ENCODE measurements at regions of chr3 and their contacts with region 1.

Region 1: DNA sequence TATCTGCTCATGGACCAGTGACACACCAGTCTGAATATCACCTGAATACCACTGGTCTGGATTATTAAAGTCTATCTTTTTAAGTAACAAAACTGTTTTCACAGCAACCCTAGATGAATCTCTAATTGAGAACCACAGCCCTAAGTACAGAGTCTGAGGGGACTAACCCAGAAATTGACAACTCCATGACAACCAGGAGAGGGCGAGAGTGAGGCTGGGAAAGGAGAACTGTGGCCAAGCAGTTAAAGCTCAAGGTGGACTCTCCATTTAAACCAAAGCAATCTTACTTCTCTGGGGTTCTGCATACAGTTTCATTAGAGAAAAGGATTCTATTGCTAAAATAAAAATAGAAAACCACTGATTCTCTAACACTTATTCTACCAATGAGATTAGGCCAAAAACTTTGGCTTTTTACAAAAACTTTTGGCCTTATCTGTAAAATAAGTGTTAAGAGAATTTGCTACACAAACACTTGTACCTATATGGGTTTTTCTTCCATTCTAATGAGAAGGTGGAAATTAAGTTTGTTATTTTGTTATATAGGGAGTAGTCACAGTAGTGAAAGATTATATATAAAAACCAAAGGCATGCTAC is 11.4 kb downstream of the NEK10 start:
- DNase-seq: peak; percentile 80
- H3K4me3 ChIP-seq: no peak overlapping the region
- H3K27ac ChIP-seq: no peak overlapping the region
- H3K4me1 ChIP-seq: peaks cover 45% of the 10 kb centered on the region
- H3K27me3 ChIP-seq: no peaks in the 10 kb centered on the region
- CTCF ChIP-seq: peak; percentile 73 to 79
- POLR2A ChIP-seq: no peak

Region 2: DNA sequence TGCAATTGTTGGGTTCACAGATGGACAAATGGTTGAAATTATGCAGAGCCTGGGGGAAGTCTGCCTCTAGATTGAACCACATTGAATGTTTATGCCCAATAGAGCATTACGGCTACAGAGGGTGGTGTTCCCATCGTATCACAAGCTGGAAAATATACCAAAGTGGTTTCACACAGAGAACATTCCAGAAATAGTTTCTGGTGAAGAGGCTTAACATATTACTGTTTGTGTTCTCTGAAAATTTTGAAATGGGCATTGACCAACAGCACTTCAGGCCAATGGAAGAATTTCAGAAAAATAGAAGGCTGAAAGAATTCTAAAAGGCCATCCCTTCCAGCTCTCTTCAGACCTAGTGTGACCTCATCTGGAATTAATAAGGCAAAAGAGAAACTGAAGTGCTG is 192.4 kb before region 1 on chr3:
- CTCF ChIA-PET with region 1: no interaction called
- POLR2A ChIA-PET with region 1: no interaction called
- dilution Hi-C with region 1: no loop called
- intact Hi-C with region 1: no loop called
- DNase-seq: no peak
- H3K4me3 ChIP-seq: no peak overlapping the region
- H3K27ac ChIP-seq: no peak overlapping the region
- H3K4me1 ChIP-seq: no peaks in the 10 kb centered on the region
- H3K27me3 ChIP-seq: no peaks in the 10 kb centered on the region
- CTCF ChIP-seq: no peak
- POLR2A ChIP-seq: no peak

Region 3: GRCh38 chr3:27312044-27312668 is 45.6 kb before region 1 on chr3:
- CTCF ChIA-PET with region 1: interaction called, 8 read pairs
- POLR2A ChIA-PET with region 1: no interaction called
- dilution Hi-C with region 1: no loop called
- intact Hi-C with region 1: loop called (anchors 2 kb)
- DNase-seq: peak; percentile 79
- H3K4me3 ChIP-seq: no peak overlapping the region
- H3K27ac ChIP-seq: no peak overlapping the region
- H3K4me1 ChIP-seq: peaks cover 9% of the 10 kb centered on the region
- H3K27me3 ChIP-seq: no peaks in the 10 kb centered on the region
- CTCF ChIP-seq: peak; percentile 57 to 68
- POLR2A ChIP-seq: no peak

Region 4: DNA sequence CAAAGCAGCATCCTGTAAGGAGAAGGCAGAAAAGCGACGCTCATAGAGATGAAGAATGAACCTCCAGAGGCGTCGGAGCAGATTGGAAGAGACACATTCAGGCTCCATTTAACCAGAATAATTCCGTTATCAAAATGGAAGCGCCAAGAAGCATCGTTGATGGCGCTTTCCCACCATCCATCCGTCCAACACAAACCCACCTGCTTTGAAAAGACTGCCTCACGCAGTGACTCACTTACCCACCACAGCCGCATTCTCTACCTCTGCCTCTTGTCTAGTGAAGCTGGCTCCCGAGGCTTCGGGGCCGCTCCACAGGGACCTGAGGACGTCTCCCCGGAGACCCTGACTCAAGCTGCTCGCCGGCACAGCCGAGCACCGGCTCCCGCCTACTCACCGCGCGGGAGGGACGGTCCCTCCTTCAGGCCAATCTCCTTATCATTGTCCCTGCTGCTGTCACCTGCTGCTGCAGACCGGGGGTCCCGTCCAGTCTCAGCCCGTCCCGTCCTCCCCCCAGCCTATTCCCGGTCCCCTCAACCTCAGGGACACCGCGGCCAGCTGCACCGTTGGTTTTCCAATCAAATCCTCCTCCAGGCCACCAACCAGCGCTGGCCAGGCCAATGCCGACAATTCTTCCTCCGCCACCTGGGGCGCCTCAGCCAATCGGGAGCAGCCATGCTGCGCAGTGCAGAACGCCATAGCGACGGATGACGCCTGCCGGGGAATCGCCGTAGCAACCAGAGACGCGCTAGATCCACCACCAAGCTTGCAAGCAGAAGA is 11.3 kb after region 1 on chr3 and contains the start of gene NEK10:
- CTCF ChIA-PET with region 1: interaction called, 20 read pairs
- POLR2A ChIA-PET with region 1: no interaction called
- dilution Hi-C with region 1: no loop called
- intact Hi-C with region 1: no loop called
- DNase-seq: peak; percentile 94
- H3K4me3 ChIP-seq: peak within 1 kb of the TSS; percentile 24 to 65 (median 58)
- H3K27ac ChIP-seq: no peak within 1 kb of the TSS
- H3K4me1 ChIP-seq: peaks cover 2% of the 10 kb centered on the region
- H3K27me3 ChIP-seq: no peaks in the 10 kb centered on the region
- CTCF ChIP-seq: peak in 1 of 2 donors; percentile 1
- POLR2A ChIP-seq: no peak
- total RNA-seq, gene NEK10: 4.6 and 5.0 TPM in 2 replicates

Region 5: GRCh38 chr3:27431116-27431515 is 73.4 kb after region 1 on chr3:
- CTCF ChIA-PET with region 1: interaction called, 3 read pairs
- POLR2A ChIA-PET with region 1: no interaction called
- dilution Hi-C with region 1: no loop called
- intact Hi-C with region 1: loop called (anchors 2 kb)
- DNase-seq: peak; percentile 96
- H3K4me3 ChIP-seq: no peak overlapping the region
- H3K27ac ChIP-seq: peak overlapping the region; percentile 52
- H3K4me1 ChIP-seq: peaks cover 12% of the 10 kb centered on the region
- H3K27me3 ChIP-seq: no peaks in the 10 kb centered on the region
- CTCF ChIP-seq: no peak
- POLR2A ChIP-seq: no peak

Region 6: GRCh38 chr3:27533718-27534573 is 176.2 kb after region 1 on chr3:
- CTCF ChIA-PET with region 1: interaction called, 7 read pairs
- POLR2A ChIA-PET with region 1: no interaction called
- dilution Hi-C with region 1: no loop called
- intact Hi-C with region 1: loop called (anchors 1 kb)
- DNase-seq: peak; percentile 97
- H3K4me3 ChIP-seq: no peak overlapping the region
- H3K27ac ChIP-seq: peak overlapping the region; percentile 86
- H3K4me1 ChIP-seq: peaks cover 34% of the 10 kb centered on the region
- H3K27me3 ChIP-seq: no peaks in the 10 kb centered on the region
- CTCF ChIP-seq: peak; percentile 39 to 45
- POLR2A ChIP-seq: no peak

Region 7: GRCh38 chr3:27659279-27660021 is 301.7 kb after region 1 on chr3:
- CTCF ChIA-PET with region 1: no interaction called
- POLR2A ChIA-PET with region 1: no interaction called
- dilution Hi-C with region 1: no loop called
- intact Hi-C with region 1: loop called (anchors 1 kb)
- DNase-seq: peak; percentile 55
- H3K4me3 ChIP-seq: no peak overlapping the region
- H3K27ac ChIP-seq: no peak overlapping the region
- H3K4me1 ChIP-seq: peaks cover 13% of the 10 kb centered on the region
- H3K27me3 ChIP-seq: no peaks in the 10 kb centered on the region
- CTCF ChIP-seq: peak; percentile 74 to 91
- POLR2A ChIP-seq: no peak